ENCODE measurements at regions of chr4 and their contacts with region 1.

Region 1: GRCh38 chr4:10074767-10075105 is 41.9 kb downstream of the WDR1 start:
- DNase-seq: peak; percentile 46
- H3K4me3 ChIP-seq: no peak overlapping the region
- H3K27ac ChIP-seq: no peak overlapping the region
- H3K4me1 ChIP-seq: no peaks in the 10 kb centered on the region
- H3K27me3 ChIP-seq: no peaks in the 10 kb centered on the region
- CTCF ChIP-seq: peak; percentile 63 to 65

Region 2: DNA sequence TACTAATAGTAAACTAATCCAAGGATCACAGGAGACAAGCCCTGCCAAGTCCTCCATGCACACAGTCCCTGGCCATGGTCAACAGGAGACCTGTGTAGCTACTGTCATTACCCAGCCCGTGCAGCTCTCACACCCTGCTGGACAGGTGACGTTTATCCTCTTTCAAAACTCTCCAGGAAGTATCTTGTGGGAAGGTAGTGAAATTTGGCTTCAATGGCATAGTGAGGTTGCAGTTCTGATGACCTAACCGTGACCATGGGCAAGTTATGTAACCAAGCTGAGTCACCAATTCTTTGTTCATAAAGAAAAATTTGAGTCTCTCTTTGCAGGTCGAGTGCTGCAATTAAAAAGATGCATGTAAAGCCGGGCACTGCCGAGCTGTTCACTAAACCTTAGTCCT is 42.1 kb before region 1 on chr4:
- CTCF ChIA-PET with region 1: no interaction called
- dilution Hi-C with region 1: loop called (anchors 5 kb)
- in situ Hi-C with region 1: no loop called
- intact Hi-C with region 1: no loop called
- DNase-seq: peak; percentile 92
- H3K4me3 ChIP-seq: no peak overlapping the region
- H3K27ac ChIP-seq: no peak overlapping the region
- H3K4me1 ChIP-seq: peaks cover 39% of the 10 kb centered on the region
- H3K27me3 ChIP-seq: no peaks in the 10 kb centered on the region
- CTCF ChIP-seq: no peak

Region 3: DNA sequence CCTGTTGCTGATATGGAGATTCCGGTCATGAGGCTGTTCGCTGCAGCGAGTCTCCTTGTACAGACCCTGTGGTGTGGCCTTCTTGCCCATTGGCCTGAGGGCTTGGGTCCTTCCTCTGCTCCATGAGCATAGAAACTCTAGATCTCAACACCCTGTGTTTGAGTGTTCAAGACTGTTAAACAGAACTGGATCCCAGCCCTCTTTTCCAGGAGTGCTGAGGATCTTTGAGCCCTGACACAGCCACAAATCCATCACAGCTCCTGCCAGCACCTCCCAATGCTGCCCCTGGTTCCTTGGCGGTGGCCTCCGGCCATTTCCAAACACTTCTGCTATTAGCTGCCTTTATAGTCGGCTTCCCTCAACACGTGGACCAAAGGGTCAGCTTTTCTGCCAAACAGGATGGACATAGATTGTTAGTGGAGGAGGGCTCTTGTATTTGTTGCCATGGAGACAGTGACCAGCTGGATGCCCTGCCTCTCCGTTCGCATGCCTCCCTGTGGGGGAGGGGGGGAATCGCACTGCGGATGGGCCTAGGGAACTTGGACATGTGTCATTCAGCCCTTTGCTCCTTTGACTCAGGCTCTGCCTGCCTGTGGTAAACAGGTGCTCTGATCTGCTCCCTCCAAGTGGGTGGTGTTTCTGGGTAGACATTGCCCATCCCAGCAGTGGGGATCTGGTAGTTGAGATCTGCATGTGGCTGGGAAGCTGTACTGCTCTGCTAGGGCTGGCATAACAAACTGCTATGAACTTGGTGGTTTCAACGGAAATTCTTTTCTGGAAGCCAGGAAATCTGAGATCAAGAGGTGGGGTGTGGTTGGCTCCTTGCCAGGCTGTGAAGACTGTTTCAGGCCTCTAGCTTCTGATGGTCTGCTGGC is 48.7 kb after region 1 on chr4:
- CTCF ChIA-PET with region 1: no interaction called
- dilution Hi-C with region 1: no loop called
- in situ Hi-C with region 1: no loop called
- intact Hi-C with region 1: no loop called
- DNase-seq: no peak
- H3K4me3 ChIP-seq: no peak overlapping the region
- H3K27ac ChIP-seq: no peak overlapping the region
- H3K4me1 ChIP-seq: peaks cover under 1% of the 10 kb centered on the region
- H3K27me3 ChIP-seq: no peaks in the 10 kb centered on the region
- CTCF ChIP-seq: no peak

Measured in mammary epithelial cell (primary cell).